A673 (cell line): ENCODE measurements at regions of chr17 and their contacts with region 1.

Region 1: DNA sequence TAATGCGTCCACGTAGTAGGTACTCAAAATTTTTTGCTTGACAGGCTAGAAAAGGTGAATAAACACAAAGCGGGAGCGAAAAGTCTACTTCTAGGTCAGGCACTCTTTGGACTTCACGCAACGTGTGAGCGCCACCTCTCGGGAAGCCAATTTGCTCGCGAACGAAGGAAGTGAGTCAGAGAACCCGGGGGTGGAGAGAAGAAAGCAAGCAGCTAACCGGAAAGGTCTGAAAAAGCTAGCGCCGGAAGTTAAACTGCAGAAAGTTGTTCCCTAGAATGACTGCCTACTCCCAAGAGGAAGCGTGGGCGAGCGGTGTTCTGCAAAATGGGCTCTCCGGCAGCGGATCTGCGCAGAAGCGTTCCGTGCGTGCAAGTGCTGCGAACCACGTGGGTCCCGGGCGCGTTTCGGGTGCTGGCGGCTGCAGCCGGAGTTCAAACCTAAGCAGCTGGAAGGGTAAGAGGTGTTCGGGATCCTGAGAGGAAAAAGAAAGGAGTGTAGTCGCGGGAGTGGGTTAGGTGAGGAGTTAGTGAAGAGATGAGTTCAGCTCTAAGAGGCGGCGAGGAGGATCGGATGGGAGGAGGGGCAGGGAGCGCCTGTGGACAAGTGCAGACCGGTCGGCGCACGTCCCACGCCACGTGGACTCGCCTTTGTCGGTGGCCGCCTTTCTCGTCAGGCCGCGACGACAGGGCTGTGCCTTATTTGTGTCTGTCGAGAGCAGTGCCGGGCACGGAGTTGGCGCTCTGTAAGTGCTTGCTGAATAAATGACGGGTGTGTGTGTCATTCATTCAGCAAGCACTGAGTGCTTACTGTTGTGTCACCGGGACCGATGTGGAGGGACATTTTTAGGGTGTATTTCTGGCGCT is at the start of gene NME1:
- DNase-seq: peak; percentile 100
- H3K4me3 ChIP-seq: peak within 1 kb of the TSS; percentile 62
- H3K27ac ChIP-seq: peak within 1 kb of the TSS; percentile 84
- H3K4me1 ChIP-seq: peaks cover 16% of the 10 kb centered on the region
- H3K27me3 ChIP-seq: no peaks in the 10 kb centered on the region
- CTCF ChIP-seq: peak; percentile 92
- total RNA-seq, gene NME1: 445 and 498 TPM in 2 replicates

Region 2: GRCh38 chr17:50719144-50719923 is 434.1 kb before region 1 on chr17 and contains the start of gene LUC7L3:
- CTCF ChIA-PET with region 1: no interaction called
- POLR2A ChIA-PET with region 1: no interaction called
- intact Hi-C with region 1: loop called (anchors 10 kb)
- DNase-seq: peak; percentile 98
- H3K4me3 ChIP-seq: peak within 1 kb of the TSS; percentile 83
- H3K27ac ChIP-seq: peak within 1 kb of the TSS; percentile 98
- H3K4me1 ChIP-seq: peaks cover 22% of the 10 kb centered on the region
- H3K27me3 ChIP-seq: no peaks in the 10 kb centered on the region
- CTCF ChIP-seq: no peak
- total RNA-seq, gene LUC7L3: 185 and 194 TPM in 2 replicates

Region 3: DNA sequence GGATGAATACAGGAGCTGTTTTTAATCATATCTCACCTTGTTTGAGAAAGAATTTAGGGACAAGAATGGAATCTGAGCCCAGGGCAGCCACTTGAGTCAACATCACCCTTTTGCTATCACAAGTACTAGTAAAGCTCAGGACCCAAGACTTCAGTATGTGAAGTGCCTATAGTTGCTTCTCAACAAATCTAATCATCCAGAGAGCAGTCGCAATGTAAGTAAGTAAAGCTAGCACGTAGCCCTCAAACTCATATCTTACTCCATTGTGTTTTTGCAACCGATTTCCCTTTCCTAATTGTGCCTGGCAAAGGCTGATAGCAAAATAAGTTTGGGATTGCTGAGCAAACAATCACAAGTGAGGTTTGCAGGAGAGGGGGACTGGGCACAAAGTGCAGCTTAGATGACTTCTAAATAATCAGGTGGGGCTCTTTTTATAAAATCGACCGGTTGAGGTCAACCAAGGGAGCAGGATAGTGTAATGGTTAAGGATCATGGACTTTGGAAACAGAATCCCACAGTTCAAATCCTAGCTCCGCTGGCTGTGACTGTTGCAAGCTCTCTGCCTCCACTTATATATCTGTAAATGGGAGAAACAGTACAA is 300.3 kb before region 1 on chr17:
- CTCF ChIA-PET with region 1: no interaction called
- POLR2A ChIA-PET with region 1: no interaction called
- intact Hi-C with region 1: loop called (anchors 5 kb)
- DNase-seq: no peak
- H3K4me3 ChIP-seq: no peak overlapping the region
- H3K27ac ChIP-seq: no peak overlapping the region
- H3K4me1 ChIP-seq: no peaks in the 10 kb centered on the region
- H3K27me3 ChIP-seq: no peaks in the 10 kb centered on the region
- CTCF ChIP-seq: no peak

Region 4: GRCh38 chr17:51000835-51001638 is 152.4 kb before region 1 on chr17:
- CTCF ChIA-PET with region 1: interaction called, 11 read pairs
- POLR2A ChIA-PET with region 1: no interaction called
- intact Hi-C with region 1: loop called (anchors 1 kb)
- DNase-seq: peak; percentile 77
- H3K4me3 ChIP-seq: no peak overlapping the region
- H3K27ac ChIP-seq: no peak overlapping the region
- H3K4me1 ChIP-seq: no peaks in the 10 kb centered on the region
- H3K27me3 ChIP-seq: no peaks in the 10 kb centered on the region
- CTCF ChIP-seq: peak; percentile 70

Region 5: DNA sequence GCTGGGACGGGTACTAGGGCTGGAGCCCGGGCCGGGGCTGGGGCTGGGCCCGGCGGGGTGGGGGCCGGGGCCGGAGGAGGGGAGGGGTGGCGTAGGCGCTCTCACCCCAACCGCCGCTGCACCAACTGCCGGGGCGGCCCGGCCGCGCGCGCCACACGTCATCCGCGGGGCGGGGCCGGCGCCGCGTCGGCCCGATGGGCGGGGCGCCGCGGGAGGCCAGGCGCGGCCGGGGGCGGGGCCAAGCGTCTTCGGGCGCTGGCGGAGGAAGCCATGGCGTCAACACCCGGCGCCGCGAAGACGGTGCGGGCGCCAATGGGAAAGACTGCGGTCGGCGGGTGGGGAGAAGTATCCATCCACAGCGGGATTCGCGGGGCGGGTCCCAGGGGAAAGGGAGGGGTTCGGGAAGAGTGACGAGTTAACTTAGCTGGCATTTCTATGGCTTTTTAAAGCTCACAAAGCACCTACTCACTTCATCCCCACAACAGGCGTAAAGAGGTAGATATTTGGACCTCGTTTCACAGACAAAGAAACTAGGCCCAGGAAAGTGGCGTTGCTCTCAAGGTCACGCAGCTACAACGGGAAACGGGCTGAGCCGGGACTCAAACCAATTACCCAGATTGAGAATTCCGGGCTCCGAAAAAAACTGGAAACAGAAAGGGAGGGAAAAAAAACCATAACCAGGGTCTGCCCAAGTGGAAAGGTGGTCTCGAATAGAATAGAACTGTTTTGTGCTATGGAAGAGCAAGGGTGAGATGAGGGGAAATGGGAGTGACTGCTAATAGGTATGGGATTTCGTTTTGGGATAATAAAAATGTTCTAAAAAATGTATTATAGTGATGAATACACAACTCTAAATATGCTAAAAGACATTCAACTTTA is 32.5 kb before region 1 on chr17 and contains the start of gene SPAG9:
- CTCF ChIA-PET with region 1: interaction called, 16 read pairs
- POLR2A ChIA-PET with region 1: interaction called, 7 read pairs
- intact Hi-C with region 1: no loop called
- DNase-seq: peak; percentile 99
- H3K4me3 ChIP-seq: peak within 1 kb of the TSS; percentile 100
- H3K27ac ChIP-seq: peak within 1 kb of the TSS; percentile 94
- H3K4me1 ChIP-seq: peaks cover 19% of the 10 kb centered on the region
- H3K27me3 ChIP-seq: no peaks in the 10 kb centered on the region
- CTCF ChIP-seq: no peak
- total RNA-seq, gene SPAG9: 82.0 and 84.9 TPM in 2 replicates